ENCODE measurements at regions of chr2 and their contacts with region 1.

Region 1: GRCh38 chr2:6865346-6866274 is at the start of gene CMPK2:
- DNase-seq: peak; percentile 95
- H3K4me3 ChIP-seq: peak within 1 kb of the TSS; percentile 75 to 82
- H3K27ac ChIP-seq: no peak within 1 kb of the TSS
- H3K4me1 ChIP-seq: peaks cover 5 to 10% of the 10 kb centered on the region in 2 experiments; a peak in 2 of 4 replicates
- H3K27me3 ChIP-seq: no peaks in the 10 kb centered on the region
- CTCF ChIP-seq: peak; percentile 37
- EP300 ChIP-seq: peak in 1 of 2 experiments; percentile 12; a peak in 1 of 4 replicates
- RAD21 ChIP-seq: no peak
- polyA plus RNA-seq, gene CMPK2: 0.86 and 1.1 TPM in 2 replicates

Region 2: GRCh38 chr2:6846967-6847681 is 18.5 kb before region 1 on chr2:
- CTCF ChIA-PET with region 1: interaction called, 14 read pairs
- POLR2A ChIA-PET with region 1: no interaction called
- DNase-seq: no peak
- H3K4me3 ChIP-seq: no peak overlapping the region
- H3K27ac ChIP-seq: no peak overlapping the region
- H3K4me1 ChIP-seq: no peaks in the 10 kb centered on the region
- H3K27me3 ChIP-seq: no peaks in the 10 kb centered on the region
- CTCF ChIP-seq: no peak
- EP300 ChIP-seq: no peak
- RAD21 ChIP-seq: no peak

Region 3: GRCh38 chr2:6877402-6878304 is 12.0 kb after region 1 on chr2 and contains the start of gene RSAD2:
- CTCF ChIA-PET with region 1: interaction called, 32 read pairs
- POLR2A ChIA-PET with region 1: no interaction called
- DNase-seq: no peak
- H3K4me3 ChIP-seq: peak within 1 kb of the TSS; percentile 32 to 33; a peak in 3 of 4 replicates
- H3K27ac ChIP-seq: no peak within 1 kb of the TSS
- H3K4me1 ChIP-seq: peaks cover 0 to 5% of the 10 kb centered on the region in 2 experiments; a peak in 2 of 4 replicates
- H3K27me3 ChIP-seq: no peaks in the 10 kb centered on the region
- CTCF ChIP-seq: no peak
- EP300 ChIP-seq: no peak
- RAD21 ChIP-seq: no peak
- polyA plus RNA-seq, gene RSAD2: 0.15 and 0.35 TPM in 2 replicates

Region 4: DNA sequence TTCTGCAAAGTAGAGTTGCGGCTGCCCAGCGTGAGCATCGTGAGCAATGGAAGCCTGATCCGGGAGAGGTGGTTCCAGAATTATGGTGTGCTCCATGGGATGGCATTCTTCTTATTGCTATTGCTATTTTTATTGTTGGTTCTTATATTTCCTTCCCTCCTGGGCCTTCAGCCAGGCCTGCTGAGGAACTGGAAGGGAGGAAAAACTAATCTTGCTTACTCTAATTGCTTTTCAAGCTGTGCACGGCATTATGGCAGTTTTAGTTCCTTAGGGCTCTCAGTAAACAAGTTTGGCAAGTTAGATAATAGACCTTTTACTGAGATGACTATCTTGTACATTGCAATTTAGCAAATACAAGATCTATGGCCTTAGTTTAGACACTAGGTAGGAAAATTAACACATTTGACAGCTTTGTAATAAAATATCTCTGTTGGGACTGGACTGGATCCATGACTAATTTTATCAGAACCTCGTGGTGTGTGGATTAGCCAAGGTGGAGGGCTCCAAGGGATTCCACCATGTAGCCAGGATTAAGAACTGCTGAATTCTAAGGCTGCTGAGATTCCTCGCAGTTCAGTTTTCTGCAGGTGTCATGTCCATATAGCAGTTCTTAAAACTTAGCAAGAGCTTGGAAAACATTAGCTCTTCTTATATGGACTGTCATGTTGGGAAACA is 18.0 kb after region 1 on chr2:
- CTCF ChIA-PET with region 1: interaction called, 32 read pairs
- POLR2A ChIA-PET with region 1: no interaction called
- DNase-seq: no peak
- H3K4me3 ChIP-seq: no peak overlapping the region
- H3K27ac ChIP-seq: no peak overlapping the region
- H3K4me1 ChIP-seq: no peaks in the 10 kb centered on the region; a peak in 1 of 4 replicates
- H3K27me3 ChIP-seq: no peaks in the 10 kb centered on the region
- CTCF ChIP-seq: no peak
- EP300 ChIP-seq: no peak
- RAD21 ChIP-seq: no peak

Measured in SK-N-SH (cell line).